CD4-positive, alpha-beta T cell (primary cell): ENCODE measurements at regions of chr17 and their contacts with region 1.

Region 1: DNA sequence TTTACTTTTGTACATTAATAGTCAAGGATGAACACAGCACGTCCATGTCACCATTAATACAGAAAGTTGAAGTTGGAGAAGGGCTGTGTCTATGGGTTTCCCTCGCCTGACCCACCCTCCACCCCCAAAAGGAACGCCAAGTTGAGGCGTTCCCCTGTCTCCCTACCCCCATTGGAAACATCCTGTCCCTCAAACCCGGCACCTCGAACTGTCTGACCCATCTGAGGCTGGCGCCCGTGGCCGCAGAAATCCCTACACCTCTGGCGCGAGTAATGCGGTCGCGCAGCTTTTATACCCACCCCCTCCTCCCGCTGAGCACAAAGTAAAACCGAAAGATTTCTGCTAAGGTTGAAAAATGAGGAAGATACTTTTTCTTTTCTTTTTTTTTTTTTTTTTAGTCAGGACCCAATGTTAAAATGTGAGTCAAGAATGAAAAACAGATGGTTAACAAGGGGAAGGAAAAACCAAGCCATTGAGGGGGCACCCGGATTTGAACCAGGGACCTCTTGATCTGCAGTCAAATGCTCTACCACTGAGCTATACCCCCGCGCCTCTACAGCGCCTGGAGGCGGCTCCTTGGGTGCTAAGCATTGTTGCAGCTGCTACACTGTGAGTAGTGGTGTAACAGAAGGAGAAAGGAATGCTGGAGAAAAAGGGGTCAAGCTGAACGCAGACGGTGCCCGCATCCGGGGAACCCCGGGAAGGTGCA is 887 bp upstream of the LASP1 start:
- DNase-seq: peak; percentile 81 to 92 (median 86)
- ATAC-seq: peak; percentile 57
- H3K4me3 ChIP-seq: peak overlapping the region; percentile 97
- H3K4me3 Mint-ChIP-seq: peak overlapping the region; percentile 98
- H3K27ac ChIP-seq: peak overlapping the region; percentile 53 to 86
- H3K27ac Mint-ChIP-seq: peak overlapping the region; percentile 95
- H3K4me1 ChIP-seq: peaks cover 52% of the 10 kb centered on the region
- H3K4me1 Mint-ChIP-seq: peaks cover 52% of the 10 kb centered on the region
- H3K27me3 ChIP-seq: no peaks in the 10 kb centered on the region
- H3K27me3 Mint-ChIP-seq: peaks cover 13% of the 10 kb centered on the region
- CTCF ChIP-seq: no peak

Region 2: GRCh38 chr17:38465391-38466345 is 403.3 kb before region 1 on chr17:
- CTCF ChIA-PET with region 1: no interaction called
- POLR2A ChIA-PET with region 1: no interaction called
- intact Hi-C with region 1: no loop called
- DNase-seq: no peak
- ATAC-seq: no peak
- H3K4me3 ChIP-seq: no peak overlapping the region
- H3K4me3 Mint-ChIP-seq: no peak overlapping the region
- H3K27ac ChIP-seq: no peak overlapping the region
- H3K27ac Mint-ChIP-seq: no peak overlapping the region
- H3K4me1 ChIP-seq: no peaks in the 10 kb centered on the region
- H3K4me1 Mint-ChIP-seq: no peaks in the 10 kb centered on the region
- H3K27me3 ChIP-seq: no peaks in the 10 kb centered on the region
- H3K27me3 Mint-ChIP-seq: no peaks in the 10 kb centered on the region
- CTCF ChIP-seq: no peak

Region 3: DNA sequence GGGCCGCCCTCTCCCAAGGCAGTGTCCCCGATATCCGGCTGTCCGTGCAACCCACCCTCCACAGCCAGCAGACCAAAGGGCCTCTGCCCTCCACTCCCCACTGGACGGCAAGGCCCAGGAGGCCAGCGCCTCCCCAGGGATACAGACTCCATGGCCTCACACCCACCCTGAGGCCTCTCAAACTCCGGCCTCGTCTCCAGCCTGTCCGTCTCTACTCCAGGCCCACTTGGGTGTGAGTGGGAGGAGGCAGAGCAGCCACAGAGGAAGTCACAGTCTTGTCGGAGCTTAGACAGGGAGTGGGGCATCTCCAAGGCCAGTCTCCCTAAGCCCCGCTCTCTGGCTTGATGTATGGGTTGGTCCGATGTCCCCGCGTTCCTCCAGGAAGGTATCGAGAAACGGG is 336.5 kb before region 1 on chr17:
- CTCF ChIA-PET with region 1: no interaction called
- POLR2A ChIA-PET with region 1: no interaction called
- intact Hi-C with region 1: no loop called
- DNase-seq: no peak
- ATAC-seq: no peak
- H3K4me3 ChIP-seq: no peak overlapping the region
- H3K4me3 Mint-ChIP-seq: no peak overlapping the region
- H3K27ac ChIP-seq: no peak overlapping the region
- H3K27ac Mint-ChIP-seq: no peak overlapping the region
- H3K4me1 ChIP-seq: no peaks in the 10 kb centered on the region
- H3K4me1 Mint-ChIP-seq: no peaks in the 10 kb centered on the region
- H3K27me3 ChIP-seq: peaks cover 0 to 8% of the 10 kb centered on the region in 2 experiments
- H3K27me3 Mint-ChIP-seq: peaks cover 37% of the 10 kb centered on the region
- CTCF ChIP-seq: no peak

Region 4: DNA sequence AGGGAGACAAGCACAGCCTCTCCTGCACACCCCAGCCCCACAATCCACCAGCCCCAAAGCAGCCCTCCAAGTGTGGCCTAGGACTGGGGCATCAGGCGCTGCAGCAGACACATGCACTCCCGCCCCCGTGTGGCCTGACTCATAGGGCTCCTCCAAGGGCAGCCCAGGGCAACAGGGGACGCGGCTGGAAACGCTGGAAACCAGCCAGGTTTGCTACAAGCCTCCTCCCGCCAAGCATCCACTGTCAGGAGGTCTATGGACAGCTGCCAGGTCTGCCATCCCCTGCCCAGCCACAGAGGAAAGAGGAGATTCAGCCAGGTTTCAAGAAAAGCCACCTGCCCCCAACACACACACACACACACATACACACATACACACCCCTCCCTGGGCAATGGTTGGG is 289.0 kb before region 1 on chr17:
- CTCF ChIA-PET with region 1: no interaction called
- POLR2A ChIA-PET with region 1: no interaction called
- intact Hi-C with region 1: no loop called
- DNase-seq: peak in 1 of 14 experiments; percentile 39
- ATAC-seq: no peak
- H3K4me3 ChIP-seq: no peak overlapping the region
- H3K4me3 Mint-ChIP-seq: no peak overlapping the region
- H3K27ac ChIP-seq: no peak overlapping the region
- H3K27ac Mint-ChIP-seq: no peak overlapping the region
- H3K4me1 ChIP-seq: peaks cover 21% of the 10 kb centered on the region
- H3K4me1 Mint-ChIP-seq: peaks cover 9% of the 10 kb centered on the region
- H3K27me3 ChIP-seq: peaks cover 63 to 85% of the 10 kb centered on the region in 2 experiments
- H3K27me3 Mint-ChIP-seq: peaks cover 85% of the 10 kb centered on the region
- CTCF ChIP-seq: no peak

Region 5: GRCh38 chr17:38824899-38825761 is 43.8 kb before region 1 on chr17 and contains the start of gene CWC25:
- CTCF ChIA-PET with region 1: interaction called, 3 read pairs
- POLR2A ChIA-PET with region 1: interaction called, 10 read pairs
- intact Hi-C with region 1: loop called (anchors 2 to 5 kb)
- DNase-seq: peak; percentile 90 to 100 (median 94)
- ATAC-seq: peak; percentile 81
- H3K4me3 ChIP-seq: peak within 1 kb of the TSS; percentile 66
- H3K4me3 Mint-ChIP-seq: peak within 1 kb of the TSS; percentile 99
- H3K27ac ChIP-seq: peak within 1 kb of the TSS; percentile 94 to 95
- H3K27ac Mint-ChIP-seq: peak within 1 kb of the TSS; percentile 100
- H3K4me1 ChIP-seq: peaks cover 25% of the 10 kb centered on the region
- H3K4me1 Mint-ChIP-seq: peaks cover 37% of the 10 kb centered on the region
- H3K27me3 ChIP-seq: no peaks in the 10 kb centered on the region
- H3K27me3 Mint-ChIP-seq: peaks cover 5% of the 10 kb centered on the region
- CTCF ChIP-seq: no peak
- total RNA-seq, gene CWC25: 63.0 to 63.3 TPM

Region 6: GRCh38 chr17:38893607-38894006 is 24.6 kb after region 1 on chr17:
- CTCF ChIA-PET with region 1: interaction called, 16 read pairs
- POLR2A ChIA-PET with region 1: interaction called, 56 read pairs
- intact Hi-C with region 1: loop called (anchors 2 kb)
- DNase-seq: peak in 3 of 14 experiments; percentile 41 to 54 (median 53)
- ATAC-seq: no peak
- H3K4me3 ChIP-seq: no peak overlapping the region
- H3K4me3 Mint-ChIP-seq: no peak overlapping the region
- H3K27ac ChIP-seq: peak overlapping the region; percentile 37 to 65
- H3K27ac Mint-ChIP-seq: peak overlapping the region; percentile 89
- H3K4me1 ChIP-seq: peaks cover 96% of the 10 kb centered on the region
- H3K4me1 Mint-ChIP-seq: peaks cover 88% of the 10 kb centered on the region
- H3K27me3 ChIP-seq: no peaks in the 10 kb centered on the region
- H3K27me3 Mint-ChIP-seq: no peaks in the 10 kb centered on the region
- CTCF ChIP-seq: no peak

Region 7: DNA sequence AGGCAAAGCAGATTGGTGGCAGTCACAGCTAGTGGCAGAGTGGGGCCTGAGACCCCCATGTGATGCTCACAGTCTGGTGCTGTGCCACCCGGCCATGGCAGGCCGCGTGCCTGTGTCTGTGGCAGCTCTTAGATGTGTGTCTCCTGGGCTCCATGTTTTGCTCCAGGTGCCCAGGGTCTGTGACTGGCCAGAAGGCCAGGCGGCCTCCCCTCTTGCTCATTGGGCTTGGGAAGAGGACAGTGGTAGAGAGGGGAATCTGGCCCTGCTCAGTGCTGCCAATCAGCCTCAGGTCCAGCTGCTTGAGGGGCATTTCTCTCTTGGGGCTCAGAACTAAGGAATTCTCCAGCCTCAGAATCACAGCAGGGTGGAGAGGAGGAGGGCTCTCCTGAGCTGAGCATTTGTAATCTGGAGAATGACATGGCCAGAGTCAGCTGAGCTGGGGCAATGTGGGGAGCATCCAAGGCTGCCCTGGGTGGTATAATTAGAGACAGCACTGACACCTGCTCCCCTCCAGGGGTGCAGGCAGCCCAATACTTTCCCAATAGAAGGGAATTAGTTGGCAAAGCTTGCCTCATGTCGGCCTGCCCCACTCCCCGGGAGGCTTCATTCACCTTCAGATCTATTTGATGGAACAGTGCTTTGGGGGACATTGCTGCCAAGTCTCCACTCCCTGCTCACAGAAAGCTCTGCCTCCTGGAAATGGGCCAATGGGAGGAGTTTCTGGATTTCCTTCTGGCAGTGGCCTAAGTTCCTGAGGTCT is 53.7 kb after region 1 on chr17:
- CTCF ChIA-PET with region 1: interaction called, 14 read pairs
- POLR2A ChIA-PET with region 1: interaction called, 20 read pairs
- intact Hi-C with region 1: no loop called
- DNase-seq: peak in 1 of 14 experiments; percentile 21
- ATAC-seq: no peak
- H3K4me3 ChIP-seq: no peak overlapping the region
- H3K4me3 Mint-ChIP-seq: no peak overlapping the region
- H3K27ac ChIP-seq: no peak overlapping the region
- H3K27ac Mint-ChIP-seq: peak overlapping the region; percentile 82
- H3K4me1 ChIP-seq: peaks cover 14% of the 10 kb centered on the region
- H3K4me1 Mint-ChIP-seq: peaks cover 37% of the 10 kb centered on the region
- H3K27me3 ChIP-seq: no peaks in the 10 kb centered on the region
- H3K27me3 Mint-ChIP-seq: no peaks in the 10 kb centered on the region
- CTCF ChIP-seq: no peak

Region 8: GRCh38 chr17:38982858-38983746 is 114.1 kb after region 1 on chr17:
- CTCF ChIA-PET with region 1: interaction called, 12 read pairs
- POLR2A ChIA-PET with region 1: interaction called, 4 read pairs
- intact Hi-C with region 1: loop called in 1 of 2 experiments (anchors 5 kb)
- DNase-seq: peak in 12 of 14 experiments; percentile 12 to 81 (median 38)
- ATAC-seq: peak; percentile 83
- H3K4me3 ChIP-seq: no peak overlapping the region
- H3K4me3 Mint-ChIP-seq: no peak overlapping the region
- H3K27ac ChIP-seq: no peak overlapping the region
- H3K27ac Mint-ChIP-seq: no peak overlapping the region
- H3K4me1 ChIP-seq: peaks cover 2% of the 10 kb centered on the region
- H3K4me1 Mint-ChIP-seq: peaks cover 6% of the 10 kb centered on the region
- H3K27me3 ChIP-seq: no peaks in the 10 kb centered on the region
- H3K27me3 Mint-ChIP-seq: no peaks in the 10 kb centered on the region
- CTCF ChIP-seq: peak; percentile 90